ENCODE measurements at regions of chr10 and their contacts with region 1.

Region 1: DNA sequence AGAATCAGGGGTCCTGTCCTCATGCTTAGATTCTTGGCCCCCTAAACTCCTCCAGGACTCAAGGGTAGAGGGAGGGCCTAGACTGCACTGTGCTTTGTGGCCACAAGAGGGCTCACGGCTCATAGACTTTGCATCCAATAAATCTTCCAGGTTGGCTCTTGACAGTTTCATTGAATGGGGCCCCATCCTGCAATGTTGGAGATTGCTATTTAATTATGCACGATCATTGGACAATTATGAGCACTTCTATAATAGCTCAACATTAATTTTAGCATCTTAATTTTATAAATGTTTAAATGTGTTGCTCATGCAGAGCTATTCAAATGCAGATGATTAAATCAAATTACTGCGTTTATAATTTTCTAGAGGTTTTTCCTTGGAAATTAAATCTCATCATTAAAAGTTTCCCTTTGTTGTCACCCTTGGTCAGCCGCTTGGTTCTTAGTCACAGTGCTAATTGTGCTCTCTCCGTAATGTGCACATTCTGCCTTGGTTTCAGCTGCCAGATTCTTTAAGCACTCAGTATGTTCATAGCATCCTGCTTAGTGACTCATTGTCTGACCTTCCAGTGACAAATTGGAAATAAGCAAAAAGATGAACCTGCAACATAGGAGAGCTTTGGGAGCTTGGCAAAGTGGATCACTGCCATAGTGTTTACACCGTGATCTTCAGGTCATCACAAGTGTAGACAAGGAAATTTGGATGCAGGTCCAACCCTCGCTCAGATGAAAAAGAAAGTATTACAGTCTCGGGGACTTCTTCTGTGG is 33.4 kb upstream of the PLPP4 start:
- DNase-seq: peak; percentile 71
- ATAC-seq: peak; percentile 73
- H3K4me3 ChIP-seq: no peak overlapping the region
- H3K27ac ChIP-seq: peak overlapping the region; percentile 54
- H3K4me1 ChIP-seq: peaks cover 32% of the 10 kb centered on the region
- H3K27me3 ChIP-seq: no peaks in the 10 kb centered on the region
- CTCF ChIP-seq: peak; percentile 89

Region 2: GRCh38 chr10:120456626-120457430 is 33.2 kb after region 1 on chr10 and contains the start of gene PLPP4:
- CTCF ChIA-PET with region 1: no interaction called
- POLR2A ChIA-PET with region 1: no interaction called
- intact Hi-C with region 1: loop called (anchors 1 kb)
- DNase-seq: peak; percentile 53
- ATAC-seq: peak; percentile 57
- H3K4me3 ChIP-seq: peak within 1 kb of the TSS; percentile 75
- H3K27ac ChIP-seq: no peak within 1 kb of the TSS
- H3K4me1 ChIP-seq: peaks cover 37% of the 10 kb centered on the region
- H3K27me3 ChIP-seq: no peaks in the 10 kb centered on the region
- CTCF ChIP-seq: no peak
- total RNA-seq, gene PLPP4: 5.0 and 10.7 TPM in 2 replicates

Region 3: GRCh38 chr10:120508393-120508792 is 84.8 kb after region 1 on chr10:
- CTCF ChIA-PET with region 1: no interaction called
- POLR2A ChIA-PET with region 1: no interaction called
- intact Hi-C with region 1: loop called (anchors 5 kb)
- DNase-seq: peak; percentile 90
- ATAC-seq: peak; percentile 90
- H3K4me3 ChIP-seq: no peak overlapping the region
- H3K27ac ChIP-seq: peak overlapping the region; percentile 87
- H3K4me1 ChIP-seq: peaks cover 50% of the 10 kb centered on the region
- H3K27me3 ChIP-seq: no peaks in the 10 kb centered on the region
- CTCF ChIP-seq: no peak

Region 4: DNA sequence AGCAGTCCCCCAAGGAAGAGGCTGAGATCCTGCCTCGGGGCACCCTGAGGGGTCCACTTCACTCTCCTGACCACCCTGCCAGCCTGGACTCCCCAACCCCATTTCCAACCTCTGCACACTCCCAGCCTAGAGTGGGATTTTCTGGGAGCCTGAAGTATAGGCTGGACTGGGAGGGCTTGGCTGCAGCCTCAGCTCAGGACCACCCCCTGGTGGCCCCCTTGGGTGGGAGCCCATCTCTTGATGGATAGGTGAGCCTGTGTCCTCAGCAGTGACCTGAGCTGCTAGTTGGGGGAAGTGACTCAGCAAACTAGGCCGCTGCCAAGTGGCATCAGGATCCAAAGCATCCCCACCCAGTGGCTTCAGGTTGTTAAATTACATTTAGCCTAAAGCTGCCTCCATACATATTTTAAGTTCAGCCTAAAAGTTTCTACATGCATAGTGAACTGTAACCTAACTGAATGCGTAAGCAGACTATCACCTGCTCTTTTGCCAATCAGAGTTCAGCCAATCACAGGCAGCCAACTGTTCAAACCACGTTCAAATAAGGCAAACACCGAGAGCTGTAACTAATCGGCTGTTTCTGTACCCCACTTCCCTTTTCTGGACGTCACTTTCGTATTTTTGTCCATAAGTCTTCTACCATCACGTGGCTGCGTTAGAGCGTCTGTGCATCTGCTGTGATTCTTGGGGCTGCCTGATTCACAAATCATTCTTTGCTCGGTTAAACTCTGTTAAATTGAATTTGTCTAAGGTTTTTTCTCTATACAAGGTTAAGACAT is 177.4 kb after region 1 on chr10:
- CTCF ChIA-PET with region 1: no interaction called
- POLR2A ChIA-PET with region 1: no interaction called
- intact Hi-C with region 1: loop called (anchors 2 kb)
- DNase-seq: peak; percentile 84
- ATAC-seq: peak; percentile 83
- H3K4me3 ChIP-seq: no peak overlapping the region
- H3K27ac ChIP-seq: peak overlapping the region; percentile 87
- H3K4me1 ChIP-seq: peaks cover 17% of the 10 kb centered on the region
- H3K27me3 ChIP-seq: no peaks in the 10 kb centered on the region
- CTCF ChIP-seq: peak; percentile 73

Region 5: DNA sequence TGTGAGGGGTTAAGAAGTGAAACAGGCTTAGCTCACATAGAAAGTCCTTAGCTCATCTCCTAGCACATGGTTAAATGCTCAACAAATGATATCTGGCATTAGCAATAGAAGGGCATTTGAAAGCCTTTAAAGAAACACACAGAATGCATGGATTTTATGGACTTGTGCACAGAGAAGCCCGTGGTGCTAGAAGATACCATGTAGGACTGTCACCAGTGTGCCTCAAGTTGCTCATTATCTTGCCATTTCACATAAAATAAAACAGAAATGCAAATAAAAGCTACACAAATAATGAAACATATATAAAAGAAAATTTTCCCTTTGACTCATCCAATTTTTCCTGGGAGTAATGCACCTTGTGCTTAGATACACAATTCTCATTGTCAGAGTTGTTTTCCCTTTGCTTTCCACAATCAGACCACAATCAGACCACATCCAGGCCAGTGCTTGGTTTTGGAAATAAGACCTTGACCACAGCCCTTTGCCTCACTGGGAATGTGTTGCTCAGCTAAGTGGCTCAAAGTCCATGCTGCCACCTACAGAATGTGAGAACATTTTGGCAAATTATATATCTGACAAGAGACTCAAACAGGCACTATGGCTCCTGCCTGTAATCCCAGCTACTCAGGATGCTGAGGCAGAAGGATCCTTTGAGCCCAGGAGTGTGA is 418.0 kb after region 1 on chr10:
- CTCF ChIA-PET with region 1: no interaction called
- POLR2A ChIA-PET with region 1: no interaction called
- intact Hi-C with region 1: loop called (anchors 5 kb)
- DNase-seq: peak; percentile 92
- ATAC-seq: peak; percentile 82
- H3K4me3 ChIP-seq: peak overlapping the region; percentile 19; the same call in 1 of the 2 replicates
- H3K27ac ChIP-seq: peak overlapping the region; percentile 96
- H3K4me1 ChIP-seq: peaks cover 40% of the 10 kb centered on the region
- H3K27me3 ChIP-seq: no peaks in the 10 kb centered on the region
- CTCF ChIP-seq: peak; percentile 46; the same call in 1 of the 2 replicates

Measured in PC-3 (cell line).